Activated CD4-positive, alpha-beta T cell treated with anti-CD3 and anti-CD28 coated beads for 36 hours (primary cell): ENCODE measurements at regions of chr5 and their contacts with region 1.

Region 1: GRCh38 chr5:40688127-40688761 is 8.5 kb downstream of the PTGER4 start:
- DNase-seq: peak; percentile 92
- ATAC-seq: peak; percentile 71
- H3K4me3 Mint-ChIP-seq: peak overlapping the region; percentile 93
- H3K27ac Mint-ChIP-seq: peak overlapping the region; percentile 90
- H3K4me1 Mint-ChIP-seq: peaks cover 69% of the 10 kb centered on the region
- H3K27me3 Mint-ChIP-seq: no peaks in the 10 kb centered on the region

Region 2: DNA sequence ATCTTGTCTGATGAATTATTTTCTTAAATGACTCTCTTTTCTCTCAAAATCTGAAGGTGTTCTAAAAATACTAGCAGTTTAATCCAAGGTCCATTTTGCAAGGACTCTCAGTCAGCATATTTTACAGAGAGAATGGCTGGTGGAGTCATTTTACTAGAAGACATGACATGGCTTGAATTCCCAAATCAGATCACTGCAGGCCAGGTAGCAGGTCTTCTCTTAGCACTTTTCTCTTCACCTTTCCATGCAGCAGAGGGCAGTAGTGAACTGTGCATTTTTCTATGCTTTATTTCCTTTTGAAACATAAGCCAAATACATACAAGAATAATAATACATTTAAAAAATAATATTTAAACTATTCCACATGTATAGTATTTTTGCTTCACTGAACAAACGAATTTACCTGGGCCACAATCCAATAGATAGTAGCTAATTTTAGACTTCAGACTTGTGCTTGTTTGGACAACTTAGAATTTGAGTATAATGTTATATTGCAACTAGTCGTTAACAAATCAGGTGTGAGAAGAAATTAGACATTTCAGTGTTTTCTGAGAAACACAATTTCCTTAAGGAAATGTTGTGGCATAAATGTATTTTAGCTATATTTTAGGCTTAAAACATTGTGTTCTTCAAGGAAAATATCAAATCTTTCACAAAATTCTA is 974.1 kb before region 1 on chr5:
- CTCF ChIA-PET with region 1: interaction called, 5 read pairs
- POLR2A ChIA-PET with region 1: interaction called, 3 read pairs
- intact Hi-C with region 1: loop called (anchors 1 to 5 kb)
- DNase-seq: peak; percentile 52
- ATAC-seq: peak; percentile 51
- H3K4me3 Mint-ChIP-seq: no peak overlapping the region
- H3K27ac Mint-ChIP-seq: no peak overlapping the region
- H3K4me1 Mint-ChIP-seq: no peaks in the 10 kb centered on the region
- H3K27me3 Mint-ChIP-seq: peaks cover 8% of the 10 kb centered on the region

Region 3: DNA sequence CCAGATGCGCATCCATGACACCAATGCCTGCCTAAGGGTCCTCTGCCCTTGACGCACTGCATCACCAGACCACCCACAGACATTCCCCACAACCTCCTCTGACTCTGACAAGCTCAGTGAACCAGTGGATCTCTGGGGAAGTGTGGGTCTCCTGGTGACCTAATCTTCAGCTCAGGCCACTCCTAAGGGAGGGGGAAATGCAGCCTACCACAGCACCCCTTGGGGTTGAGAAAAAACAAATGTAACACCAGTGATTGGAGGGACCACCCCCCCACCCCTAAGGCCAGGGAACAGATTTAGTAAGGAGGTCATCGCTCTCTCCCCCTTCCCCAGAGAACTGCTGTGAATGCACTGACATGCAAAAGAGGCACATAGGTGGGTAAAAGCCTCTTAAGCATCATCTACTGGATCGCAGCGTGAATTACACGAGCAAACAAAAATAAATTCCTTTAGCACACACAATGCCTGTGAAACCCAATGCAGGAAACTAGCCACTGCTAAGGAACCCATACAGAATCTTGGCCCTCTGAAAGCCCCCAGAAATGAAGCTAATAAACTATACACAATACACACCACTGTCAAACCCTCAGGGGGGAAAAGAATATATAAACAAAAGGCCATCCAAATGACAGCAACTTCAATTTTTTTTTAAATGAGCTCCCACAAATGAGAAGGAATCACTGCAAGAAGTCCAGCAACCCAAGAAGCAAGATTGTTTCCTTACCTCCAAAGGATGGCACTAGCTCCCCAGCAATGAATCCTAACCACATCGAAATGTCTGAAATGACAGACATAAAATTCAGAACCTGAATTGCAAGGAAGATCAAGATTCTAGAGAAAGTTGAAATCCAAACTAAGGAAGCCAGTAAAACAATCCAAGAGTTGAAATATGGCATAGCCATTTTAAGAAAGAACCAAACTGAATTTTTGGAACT is 522.2 kb before region 1 on chr5:
- CTCF ChIA-PET with region 1: interaction called, 3 read pairs
- POLR2A ChIA-PET with region 1: no interaction called
- intact Hi-C with region 1: loop called (anchors 1 to 2 kb)
- DNase-seq: peak; percentile 39
- ATAC-seq: no peak
- H3K4me3 Mint-ChIP-seq: no peak overlapping the region
- H3K27ac Mint-ChIP-seq: no peak overlapping the region
- H3K4me1 Mint-ChIP-seq: peaks cover 11% of the 10 kb centered on the region
- H3K27me3 Mint-ChIP-seq: no peaks in the 10 kb centered on the region

Region 4: GRCh38 chr5:40277161-40277906 is 410.9 kb before region 1 on chr5:
- CTCF ChIA-PET with region 1: interaction called, 3 read pairs
- POLR2A ChIA-PET with region 1: no interaction called
- intact Hi-C with region 1: loop called (anchors 1 to 2 kb)
- DNase-seq: peak; percentile 59
- ATAC-seq: peak; percentile 77
- H3K4me3 Mint-ChIP-seq: peak overlapping the region; percentile 39
- H3K27ac Mint-ChIP-seq: peak overlapping the region; percentile 95
- H3K4me1 Mint-ChIP-seq: peaks cover 77% of the 10 kb centered on the region
- H3K27me3 Mint-ChIP-seq: no peaks in the 10 kb centered on the region

Region 5: DNA sequence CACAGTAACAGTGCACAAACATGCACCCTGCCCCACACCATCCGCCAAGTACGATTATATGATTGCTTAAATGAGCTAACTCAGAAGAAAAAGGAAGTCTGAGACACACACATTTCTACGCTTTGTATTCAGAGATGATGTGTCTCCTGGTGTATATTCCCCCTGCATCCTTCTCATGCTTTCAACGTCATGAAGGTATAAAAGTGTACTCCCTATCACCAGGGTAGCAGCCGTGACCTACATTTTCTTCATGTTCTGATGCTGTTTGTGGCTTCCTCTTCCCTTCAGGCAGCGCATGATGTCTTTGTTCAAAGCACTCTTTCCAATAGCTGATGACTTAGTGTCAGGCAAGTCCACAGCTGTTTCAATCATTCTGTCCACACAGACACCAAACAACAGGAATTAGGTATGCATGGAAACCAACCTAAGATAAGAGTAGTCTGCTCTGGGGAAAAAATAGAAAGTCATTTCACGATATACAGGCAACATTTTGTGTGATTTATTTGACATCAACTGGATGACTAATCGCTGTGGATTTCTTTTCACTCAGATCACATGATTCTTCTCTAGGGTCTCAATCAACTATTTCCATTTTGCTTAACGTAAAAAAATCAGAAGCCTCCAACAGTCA is 277.9 kb before region 1 on chr5:
- CTCF ChIA-PET with region 1: interaction called, 12 read pairs
- POLR2A ChIA-PET with region 1: interaction called, 3 read pairs
- intact Hi-C with region 1: loop called (anchors 1 kb)
- DNase-seq: peak; percentile 80
- ATAC-seq: peak; percentile 82
- H3K4me3 Mint-ChIP-seq: peak overlapping the region; percentile 58
- H3K27ac Mint-ChIP-seq: peak overlapping the region; percentile 94
- H3K4me1 Mint-ChIP-seq: peaks cover 67% of the 10 kb centered on the region
- H3K27me3 Mint-ChIP-seq: no peaks in the 10 kb centered on the region

Region 6: DNA sequence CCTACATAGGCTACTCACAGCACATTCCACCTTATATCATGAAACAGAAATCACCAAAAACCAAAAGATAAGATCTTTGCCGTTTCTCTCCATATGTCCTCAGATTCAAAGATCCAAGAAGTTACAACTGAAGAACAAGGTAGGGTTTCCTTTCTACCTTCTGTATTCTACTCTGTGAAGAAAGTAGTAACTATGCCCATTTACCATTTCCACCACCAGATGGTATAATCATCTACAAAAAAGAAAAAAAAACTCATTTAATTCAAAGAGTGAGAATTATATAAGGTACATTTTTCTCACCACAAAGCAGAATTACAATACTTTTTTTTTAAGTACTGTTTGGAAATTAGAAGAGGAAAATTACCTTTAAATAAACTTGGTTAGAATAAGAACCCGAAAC is 181.1 kb before region 1 on chr5:
- CTCF ChIA-PET with region 1: interaction called, 4 read pairs
- POLR2A ChIA-PET with region 1: no interaction called
- intact Hi-C with region 1: loop called (anchors 1 to 5 kb)
- DNase-seq: no peak
- ATAC-seq: peak; percentile 47
- H3K4me3 Mint-ChIP-seq: no peak overlapping the region
- H3K27ac Mint-ChIP-seq: peak overlapping the region; percentile 33
- H3K4me1 Mint-ChIP-seq: peaks cover 29% of the 10 kb centered on the region
- H3K27me3 Mint-ChIP-seq: no peaks in the 10 kb centered on the region

Region 7: GRCh38 chr5:40755407-40756365 is 67.4 kb after region 1 on chr5 and contains the start of gene TTC33:
- CTCF ChIA-PET with region 1: no interaction called
- POLR2A ChIA-PET with region 1: no interaction called
- intact Hi-C with region 1: loop called (anchors 2 to 5 kb)
- DNase-seq: peak; percentile 99
- ATAC-seq: peak; percentile 90
- H3K4me3 Mint-ChIP-seq: no peak within 1 kb of the TSS
- H3K27ac Mint-ChIP-seq: no peak within 1 kb of the TSS
- H3K4me1 Mint-ChIP-seq: peaks cover 21% of the 10 kb centered on the region
- H3K27me3 Mint-ChIP-seq: no peaks in the 10 kb centered on the region
- total RNA-seq, gene TTC33: 31.4 to 31.7 TPM